ENCODE measurements at regions of chr11 and their contacts with region 1.

Region 1: DNA sequence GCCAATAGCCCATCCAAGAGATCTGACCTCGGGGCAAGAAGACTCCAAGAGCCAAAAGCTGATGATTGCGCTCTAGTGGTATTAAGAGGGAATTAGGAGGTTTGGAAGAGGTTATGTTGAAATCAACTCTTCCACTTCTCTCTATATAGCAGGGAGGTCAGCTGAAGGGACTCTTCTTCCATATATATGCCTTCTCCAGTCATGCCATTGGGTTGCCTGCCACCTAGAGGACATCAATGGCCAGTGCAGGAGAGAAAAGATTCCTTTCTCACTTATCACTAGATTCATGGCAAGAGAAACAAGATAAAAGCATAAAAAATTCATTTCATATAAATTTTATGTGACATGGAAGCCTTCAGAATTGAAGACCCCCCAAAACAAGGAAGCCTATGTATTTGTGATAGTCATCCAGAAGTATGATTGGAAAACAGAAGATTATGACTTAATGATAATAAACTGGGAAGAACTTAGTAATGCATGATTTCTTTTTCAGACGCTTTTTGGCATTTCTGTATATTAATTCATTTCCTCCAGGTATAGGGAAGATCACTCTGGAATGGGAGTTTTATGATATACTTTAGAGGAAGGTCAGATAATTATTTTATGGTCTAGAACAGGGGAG is 435.1 kb upstream of the DDI1 start:
- DNase-seq: peak; percentile 37
- H3K4me3 Mint-ChIP-seq: no peak overlapping the region
- H3K27ac Mint-ChIP-seq: no peak overlapping the region
- H3K4me1 Mint-ChIP-seq: no peaks in the 10 kb centered on the region
- H3K27me3 Mint-ChIP-seq: no peaks in the 10 kb centered on the region

Region 2: DNA sequence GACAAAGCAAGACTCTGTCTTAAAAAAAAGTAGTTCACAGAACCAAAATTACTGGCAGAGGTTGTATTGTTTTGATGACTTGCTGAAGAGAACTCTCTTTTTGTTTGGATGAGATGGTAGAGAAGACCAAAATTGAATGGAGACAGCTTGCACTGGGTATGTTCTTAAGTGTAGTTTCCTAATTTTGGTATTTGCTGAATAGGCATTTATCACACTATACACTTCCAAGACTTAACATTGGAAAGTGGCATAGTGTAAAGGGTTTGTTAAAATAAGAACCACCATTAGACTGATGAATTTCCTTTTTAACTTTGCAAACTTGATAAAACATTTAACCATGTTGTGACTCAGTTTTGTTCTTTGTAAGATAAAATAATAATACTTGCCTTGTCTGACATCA is 504.1 kb before region 1 on chr11:
- CTCF ChIA-PET with region 1: no interaction called
- POLR2A ChIA-PET with region 1: no interaction called
- intact Hi-C with region 1: no loop called
- DNase-seq: no peak
- H3K4me3 Mint-ChIP-seq: no peak overlapping the region
- H3K27ac Mint-ChIP-seq: no peak overlapping the region
- H3K4me1 Mint-ChIP-seq: peaks cover 10% of the 10 kb centered on the region
- H3K27me3 Mint-ChIP-seq: peaks cover 39% of the 10 kb centered on the region

Region 3: GRCh38 chr11:103108933-103109817 is 492.2 kb before region 1 on chr11 and contains the start of gene DYNC2H1:
- CTCF ChIA-PET with region 1: interaction called, 5 read pairs
- POLR2A ChIA-PET with region 1: no interaction called
- intact Hi-C with region 1: loop called (anchors 1 kb)
- DNase-seq: peak; percentile 93
- H3K4me3 Mint-ChIP-seq: peak within 1 kb of the TSS; percentile 98
- H3K27ac Mint-ChIP-seq: peak within 1 kb of the TSS; percentile 58
- H3K4me1 Mint-ChIP-seq: peaks cover 5% of the 10 kb centered on the region
- H3K27me3 Mint-ChIP-seq: peaks cover 6% of the 10 kb centered on the region
- total RNA-seq, gene DYNC2H1: 1.4 to 1.7 TPM

Region 4: GRCh38 chr11:103202048-103202651 is 399.2 kb before region 1 on chr11:
- CTCF ChIA-PET with region 1: interaction called, 7 read pairs
- POLR2A ChIA-PET with region 1: no interaction called
- intact Hi-C with region 1: loop called (anchors 1 kb)
- DNase-seq: no peak
- H3K4me3 Mint-ChIP-seq: no peak overlapping the region
- H3K27ac Mint-ChIP-seq: no peak overlapping the region
- H3K4me1 Mint-ChIP-seq: no peaks in the 10 kb centered on the region
- H3K27me3 Mint-ChIP-seq: no peaks in the 10 kb centered on the region

Region 5: GRCh38 chr11:103326070-103326794 is 275.1 kb before region 1 on chr11:
- CTCF ChIA-PET with region 1: interaction called, 30 read pairs
- POLR2A ChIA-PET with region 1: no interaction called
- intact Hi-C with region 1: loop called (anchors 1 kb)
- DNase-seq: no peak
- H3K4me3 Mint-ChIP-seq: no peak overlapping the region
- H3K27ac Mint-ChIP-seq: no peak overlapping the region
- H3K4me1 Mint-ChIP-seq: peaks cover 6% of the 10 kb centered on the region
- H3K27me3 Mint-ChIP-seq: no peaks in the 10 kb centered on the region